Activated T-helper 1 cell treated with anti-CD3 and anti-CD28 coated beads, Interleukin-12 subunit alpha, Interleukin-12 subunit beta, Interleukin-2, Interleukin-4 antibody, amounts not matched to agents 30 ng/mL and 10 ng/mL and 1 ng/mL, durations not matched to agents 14 hours and 24 hours and 36 hours (primary cell): ENCODE measurements at regions of chr1 and their contacts with region 1.

Region 1: GRCh38 chr1:162497723-162498500 is at the start of gene UHMK1:
- DNase-seq: peak; percentile 84
- H3K4me3 Mint-ChIP-seq: peak within 1 kb of the TSS; percentile 99
- H3K27ac Mint-ChIP-seq: peak within 1 kb of the TSS; percentile 93
- H3K4me1 Mint-ChIP-seq: peaks cover 38% of the 10 kb centered on the region
- H3K27me3 Mint-ChIP-seq: no peaks in the 10 kb centered on the region
- total RNA-seq, gene UHMK1: 59.6 and 61.6 TPM in 2 replicates

Region 2: GRCh38 chr1:162056043-162056442 is 441.9 kb before region 1 on chr1:
- intact Hi-C with region 1: loop called (anchors 1 kb)
- DNase-seq: peak; percentile 9
- H3K4me3 Mint-ChIP-seq: no peak overlapping the region
- H3K27ac Mint-ChIP-seq: no peak overlapping the region
- H3K4me1 Mint-ChIP-seq: no peaks in the 10 kb centered on the region
- H3K27me3 Mint-ChIP-seq: peaks cover 6% of the 10 kb centered on the region

Region 3: GRCh38 chr1:162069328-162070093 is 428.4 kb before region 1 on chr1 and contains the start of gene NOS1AP:
- intact Hi-C with region 1: loop called (anchors 1 kb)
- DNase-seq: peak; percentile 72
- H3K4me3 Mint-ChIP-seq: peak within 1 kb of the TSS; percentile 80
- H3K27ac Mint-ChIP-seq: no peak within 1 kb of the TSS
- H3K4me1 Mint-ChIP-seq: no peaks in the 10 kb centered on the region
- H3K27me3 Mint-ChIP-seq: peaks cover 49% of the 10 kb centered on the region
- total RNA-seq, gene NOS1AP: 0.10 TPM in 1 of 2 replicates, not detected in the other

Region 4: GRCh38 chr1:162276493-162276892 is 221.4 kb before region 1 on chr1:
- intact Hi-C with region 1: no loop called
- DNase-seq: no peak
- H3K4me3 Mint-ChIP-seq: no peak overlapping the region
- H3K27ac Mint-ChIP-seq: no peak overlapping the region
- H3K4me1 Mint-ChIP-seq: no peaks in the 10 kb centered on the region
- H3K27me3 Mint-ChIP-seq: peaks cover 16% of the 10 kb centered on the region

Region 5: DNA sequence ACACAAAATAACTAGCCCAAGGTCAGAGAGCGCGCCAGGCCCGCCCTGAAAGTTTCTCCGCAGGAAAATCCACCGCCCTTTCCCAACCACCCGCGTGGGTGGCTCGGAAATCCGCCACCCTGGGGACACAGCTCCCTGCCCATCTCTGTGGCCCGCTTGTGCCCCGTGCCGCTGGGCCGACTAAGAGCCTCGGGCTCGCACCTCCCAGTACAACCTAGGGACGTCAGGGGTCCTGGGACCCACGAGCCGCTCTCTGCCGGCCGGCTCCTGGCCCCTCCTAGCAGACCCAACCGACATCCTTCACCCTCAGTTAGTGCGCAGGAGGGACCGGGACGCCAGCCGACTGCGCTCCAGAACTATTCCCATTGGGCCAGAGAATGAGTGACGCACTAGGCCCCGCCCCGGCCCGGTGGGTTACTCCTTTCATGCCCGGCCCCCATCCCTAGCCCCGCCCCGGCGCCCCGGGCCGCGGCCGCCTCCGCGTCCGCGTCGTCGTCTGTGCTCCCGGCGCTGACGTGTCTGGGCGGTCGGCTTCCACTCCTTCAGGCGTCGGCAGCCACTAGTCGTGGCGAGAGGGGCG is 63.2 kb after region 1 on chr1:
- intact Hi-C with region 1: loop called (anchors 1 kb)
- DNase-seq: peak; percentile 96
- H3K4me3 Mint-ChIP-seq: peak overlapping the region; percentile 87
- H3K27ac Mint-ChIP-seq: peak overlapping the region; percentile 93
- H3K4me1 Mint-ChIP-seq: peaks cover 49% of the 10 kb centered on the region
- H3K27me3 Mint-ChIP-seq: no peaks in the 10 kb centered on the region

Region 6: DNA sequence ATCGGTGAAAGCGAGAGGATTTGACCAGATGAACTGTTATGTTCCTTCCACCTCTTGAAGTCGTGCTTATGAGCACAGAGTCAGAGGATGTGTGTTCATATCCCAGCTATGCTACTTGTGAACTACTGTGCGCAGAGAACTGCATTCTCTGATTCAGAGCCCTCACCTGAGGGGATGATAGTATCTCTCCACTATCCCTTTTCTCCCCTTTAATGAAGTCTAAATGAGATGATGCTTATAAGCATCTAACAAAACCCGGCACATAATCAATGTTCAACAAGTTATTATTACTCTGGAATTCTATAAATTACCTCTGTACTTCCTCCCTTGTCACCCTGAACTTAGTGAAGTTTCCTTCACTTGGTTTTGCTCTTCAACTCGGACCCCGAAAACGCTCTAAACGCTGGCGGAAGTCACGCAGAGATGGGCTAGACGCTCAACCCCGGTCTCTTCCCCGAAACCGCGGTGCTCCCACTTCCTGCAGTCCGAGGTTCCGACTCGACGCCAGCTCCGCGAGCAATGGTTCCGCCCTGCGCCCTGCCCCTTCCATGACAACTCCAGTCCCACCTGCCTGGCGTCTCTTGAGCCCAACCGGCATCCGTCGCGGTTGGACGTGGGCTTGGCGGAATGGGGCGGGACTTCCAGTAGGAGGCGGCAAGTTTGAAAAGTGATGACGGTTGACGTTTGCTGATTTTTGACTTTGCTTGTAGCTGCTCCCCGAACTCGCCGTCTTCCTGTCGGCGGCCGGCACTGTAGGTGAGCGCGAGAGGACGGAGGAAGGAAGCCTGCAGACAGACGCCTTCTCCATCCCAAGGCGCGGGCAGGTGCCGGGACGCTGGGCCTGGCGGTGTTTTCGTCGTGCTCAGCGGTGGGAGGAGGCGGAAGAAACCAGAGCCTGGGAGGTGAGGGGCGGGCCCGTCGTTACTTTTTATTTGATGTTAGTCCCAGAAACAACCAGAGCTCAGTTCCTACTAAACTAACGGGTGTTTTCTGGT is 823.7 kb after region 1 on chr1 and contains the start of gene NUF2:
- intact Hi-C with region 1: loop called (anchors 2 kb)
- DNase-seq: peak; percentile 97
- H3K4me3 Mint-ChIP-seq: peak within 1 kb of the TSS; percentile 92
- H3K27ac Mint-ChIP-seq: peak within 1 kb of the TSS; percentile 98
- H3K4me1 Mint-ChIP-seq: peaks cover 52% of the 10 kb centered on the region
- H3K27me3 Mint-ChIP-seq: peaks cover 3% of the 10 kb centered on the region
- total RNA-seq, gene NUF2: 36.8 and 37.7 TPM in 2 replicates